ENCODE measurements at regions of chr3 and their contacts with region 1.

Region 1: DNA sequence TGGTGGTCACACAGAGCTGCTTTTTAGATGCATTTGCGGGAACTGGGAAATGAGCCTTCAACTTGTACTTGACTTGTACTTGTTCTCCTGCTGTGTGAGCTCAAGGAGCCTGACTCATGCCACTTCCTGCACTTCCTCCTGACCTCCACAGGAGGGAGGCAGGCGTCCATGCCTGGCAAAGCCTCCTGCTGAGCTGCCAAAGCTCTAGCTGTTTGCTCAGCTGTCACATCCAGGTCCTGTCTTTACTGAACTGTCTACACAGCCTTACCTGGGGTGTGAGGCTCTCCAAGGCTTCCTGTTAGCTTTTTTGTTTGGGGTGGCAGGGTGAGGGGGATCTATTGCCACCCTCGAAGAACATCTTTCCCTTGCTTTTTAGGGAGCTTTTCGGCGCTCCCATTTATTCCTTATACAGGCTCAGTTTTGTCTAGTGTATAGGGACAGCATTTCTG is 6.4 kb downstream of the THPO start:
- DNase-seq: peak; percentile 84
- H3K4me3 ChIP-seq: no peak overlapping the region
- H3K27ac ChIP-seq: no peak overlapping the region
- H3K4me1 ChIP-seq: peaks cover 9% of the 10 kb centered on the region
- H3K27me3 ChIP-seq: no peaks in the 10 kb centered on the region
- CTCF ChIP-seq: peak; percentile 51 to 89 (median 77)
- POLR2A ChIP-seq: no peak

Region 2: DNA sequence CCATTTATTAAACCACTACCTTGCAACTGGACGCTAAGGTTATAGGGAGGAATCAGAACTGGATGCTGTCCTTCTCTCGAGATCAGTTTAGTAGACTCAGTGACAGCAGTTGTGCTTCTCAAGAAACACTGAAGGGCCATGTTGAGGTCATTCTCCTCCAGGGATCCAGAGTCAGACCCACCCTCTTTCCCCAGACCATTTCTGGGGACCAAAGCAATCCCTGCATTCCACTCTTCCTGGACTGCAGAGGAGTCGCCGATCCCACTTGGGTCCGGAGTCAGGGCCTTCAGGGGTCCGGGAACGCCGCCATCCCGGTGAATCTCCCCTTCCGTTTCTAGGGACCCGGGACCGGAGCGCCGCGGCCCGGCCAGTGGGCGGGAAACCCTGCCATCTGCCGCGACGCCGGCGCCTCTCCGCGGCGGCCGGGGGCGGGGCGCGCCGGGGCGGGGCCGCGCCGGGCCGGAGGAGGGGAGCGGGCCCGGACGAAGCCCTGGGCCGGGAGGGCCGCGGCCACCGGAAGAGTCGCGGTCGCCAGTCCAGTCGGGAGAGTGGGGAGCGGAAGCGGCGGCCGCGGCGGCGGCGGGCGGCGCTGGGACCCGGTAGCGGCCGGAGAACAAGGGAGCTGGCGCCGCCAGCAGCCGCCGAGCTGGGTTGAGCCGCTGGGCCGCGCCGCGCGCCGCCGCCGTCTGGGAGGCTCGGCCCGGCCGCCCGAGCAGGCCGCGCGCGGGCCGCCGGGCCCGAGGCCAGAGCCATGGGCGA is 216.5 kb before region 1 on chr3 and contains the start of gene DVL3:
- intact Hi-C with region 1: no loop called
- DNase-seq: peak; percentile 69
- H3K4me3 ChIP-seq: peak within 1 kb of the TSS; percentile 82 to 92
- H3K27ac ChIP-seq: peak within 1 kb of the TSS; percentile 88 to 92
- H3K4me1 ChIP-seq: peaks cover 22% of the 10 kb centered on the region
- H3K27me3 ChIP-seq: no peaks in the 10 kb centered on the region
- CTCF ChIP-seq: no peak
- POLR2A ChIP-seq: no peak
- total RNA-seq, gene DVL3: 80.5 to 86.8 TPM

Region 3: GRCh38 chr3:184543843-184544512 is 172.4 kb after region 1 on chr3:
- intact Hi-C with region 1: loop called (anchors 10 kb)
- DNase-seq: peak; percentile 90
- H3K4me3 ChIP-seq: no peak overlapping the region
- H3K27ac ChIP-seq: no peak overlapping the region
- H3K4me1 ChIP-seq: no peaks in the 10 kb centered on the region
- H3K27me3 ChIP-seq: no peaks in the 10 kb centered on the region
- CTCF ChIP-seq: peak; percentile 80 to 95 (median 93)
- POLR2A ChIP-seq: no peak

Measured in testis (tissue), 5 donors.